Activated CD4-positive, alpha-beta T cell treated with anti-CD3 and anti-CD28 coated beads, Interleukin-2, amount 10 ng/mL, durations not matched to agents 24 days and 14 days (primary cell): ENCODE measurements at regions of chr5 and their contacts with region 1.

Region 1: DNA sequence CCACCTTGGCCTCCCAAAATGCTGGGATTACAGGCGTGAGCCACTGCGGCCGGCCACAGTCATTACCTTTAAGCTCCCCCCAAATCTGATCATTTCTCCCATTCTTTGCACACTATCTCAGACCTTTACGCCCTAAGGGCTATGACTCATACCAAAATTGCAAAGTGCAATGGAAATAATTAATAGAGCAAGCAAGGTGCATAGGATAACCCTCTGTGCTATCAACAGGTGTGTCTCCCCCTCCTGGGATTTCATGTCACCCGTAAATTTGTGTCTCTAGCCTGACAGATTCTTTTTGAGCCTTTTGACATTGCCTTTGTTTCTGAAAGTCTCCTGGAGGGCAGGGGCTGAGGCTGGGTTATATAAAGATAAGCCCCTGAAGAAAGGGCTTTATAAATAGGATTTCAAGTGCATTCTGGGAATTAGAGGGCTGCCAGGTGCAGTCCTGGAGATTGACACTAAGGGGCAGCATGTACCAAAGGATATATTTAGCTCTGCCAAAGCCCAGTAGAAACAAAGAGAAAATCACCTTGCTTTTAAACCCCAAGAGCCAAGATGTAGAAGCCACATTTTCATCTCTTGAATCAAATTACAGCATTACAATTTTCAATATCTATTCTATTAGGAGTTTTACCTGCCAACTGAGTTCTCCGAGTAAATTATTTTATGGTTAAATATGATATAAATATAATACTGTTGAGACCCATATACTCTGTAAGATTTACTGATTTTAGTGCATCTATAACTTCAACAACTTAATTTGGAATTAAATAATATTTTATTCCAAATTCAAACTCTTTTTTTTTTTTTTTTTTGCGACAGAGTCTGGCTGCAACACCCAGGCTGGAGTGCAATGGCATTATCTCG is 18.2 kb downstream of the S100Z start:
- DNase-seq: peak; percentile 91
- H3K4me3 Mint-ChIP-seq: no peak overlapping the region
- H3K27ac Mint-ChIP-seq: no peak overlapping the region
- H3K4me1 Mint-ChIP-seq: peaks cover 6% of the 10 kb centered on the region
- H3K27me3 Mint-ChIP-seq: no peaks in the 10 kb centered on the region

Region 2: DNA sequence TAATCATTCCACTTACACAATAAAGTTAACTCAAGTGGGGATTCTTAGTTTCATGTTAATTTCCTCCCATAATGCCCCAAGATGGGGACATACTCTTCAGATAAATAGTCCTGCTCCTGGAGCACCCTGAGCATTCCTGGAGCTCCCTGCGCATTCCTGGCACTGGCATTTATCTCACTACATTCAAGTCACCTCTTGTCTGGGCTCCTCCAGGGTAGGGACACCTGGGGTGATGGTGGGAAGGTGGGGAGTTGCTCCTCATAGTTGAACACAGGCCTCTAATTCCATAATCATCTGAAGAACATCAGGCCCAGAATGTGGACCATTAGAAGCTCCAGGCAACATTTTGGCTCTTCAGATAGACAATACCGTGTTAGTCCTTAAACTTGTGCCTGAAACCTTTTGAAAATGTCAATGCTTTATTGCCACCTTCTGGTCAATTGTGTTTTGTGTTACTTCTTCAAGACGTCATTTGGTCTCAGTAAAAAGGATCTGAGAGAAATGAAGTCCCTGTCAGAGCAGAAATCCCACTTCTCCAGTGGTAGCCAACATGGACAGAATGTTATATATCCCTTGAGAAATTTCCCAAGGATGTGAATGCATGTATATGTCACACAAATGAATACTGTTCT is 148.0 kb after region 1 on chr5:
- intact Hi-C with region 1: loop called (anchors 1 kb)
- DNase-seq: peak; percentile 60
- H3K4me3 Mint-ChIP-seq: no peak overlapping the region
- H3K27ac Mint-ChIP-seq: no peak overlapping the region
- H3K4me1 Mint-ChIP-seq: peaks cover 13% of the 10 kb centered on the region
- H3K27me3 Mint-ChIP-seq: peaks cover 16% of the 10 kb centered on the region

Region 3: GRCh38 chr5:77076961-77077823 is 209.1 kb after region 1 on chr5:
- intact Hi-C with region 1: loop called (anchors 1 kb)
- DNase-seq: peak; percentile 89
- H3K4me3 Mint-ChIP-seq: peak overlapping the region; percentile 66
- H3K27ac Mint-ChIP-seq: no peak overlapping the region
- H3K4me1 Mint-ChIP-seq: peaks cover 4% of the 10 kb centered on the region
- H3K27me3 Mint-ChIP-seq: no peaks in the 10 kb centered on the region